Spleen (tissue), 13 donors: ENCODE measurements at regions of chr2 and their contacts with region 1.

Region 1: GRCh38 chr2:127649684-127650040 is 3.7 kb downstream of the GPR17 start:
- DNase-seq: peak; percentile 92
- H3K4me3 ChIP-seq: peak overlapping the region in 1 of 8 donors; percentile 21
- H3K27ac ChIP-seq: peak overlapping the region in 6 of 8 donors; percentile 36 to 87 (median 67)
- H3K4me1 ChIP-seq: peaks cover 26 to 88% (median 68%) of the 10 kb centered on the region in 6 donors
- H3K27me3 ChIP-seq: no peaks in the 10 kb centered on the region
- CTCF ChIP-seq: peak; percentile 64 to 92 (median 88)
- POLR2A ChIP-seq: no peak

Region 2: DNA sequence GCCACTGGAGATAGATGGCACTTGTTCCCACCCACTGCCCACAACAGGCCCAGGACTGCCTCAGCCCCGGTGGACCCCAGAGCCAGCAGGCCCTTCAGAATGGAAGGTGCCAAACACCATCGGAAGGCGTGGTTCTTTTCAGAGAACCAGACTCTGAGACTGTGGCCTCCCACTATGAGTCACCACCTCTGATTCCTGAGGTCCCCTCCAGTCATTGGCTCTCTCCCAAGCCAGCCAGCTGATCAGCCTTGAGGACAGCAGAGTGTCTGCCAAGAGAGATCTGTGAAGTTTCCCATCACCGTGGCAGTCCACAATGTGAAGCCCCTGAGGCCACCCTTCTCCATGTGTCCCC is 251.4 kb before region 1 on chr2:
- intact Hi-C with region 1: no loop called
- DNase-seq: no peak
- H3K4me3 ChIP-seq: no peak overlapping the region
- H3K27ac ChIP-seq: no peak overlapping the region
- H3K4me1 ChIP-seq: peaks cover 0 to 13% (median 5%) of the 10 kb centered on the region in 6 donors
- H3K27me3 ChIP-seq: no peaks in the 10 kb centered on the region
- CTCF ChIP-seq: no peak
- POLR2A ChIP-seq: no peak

Region 3: DNA sequence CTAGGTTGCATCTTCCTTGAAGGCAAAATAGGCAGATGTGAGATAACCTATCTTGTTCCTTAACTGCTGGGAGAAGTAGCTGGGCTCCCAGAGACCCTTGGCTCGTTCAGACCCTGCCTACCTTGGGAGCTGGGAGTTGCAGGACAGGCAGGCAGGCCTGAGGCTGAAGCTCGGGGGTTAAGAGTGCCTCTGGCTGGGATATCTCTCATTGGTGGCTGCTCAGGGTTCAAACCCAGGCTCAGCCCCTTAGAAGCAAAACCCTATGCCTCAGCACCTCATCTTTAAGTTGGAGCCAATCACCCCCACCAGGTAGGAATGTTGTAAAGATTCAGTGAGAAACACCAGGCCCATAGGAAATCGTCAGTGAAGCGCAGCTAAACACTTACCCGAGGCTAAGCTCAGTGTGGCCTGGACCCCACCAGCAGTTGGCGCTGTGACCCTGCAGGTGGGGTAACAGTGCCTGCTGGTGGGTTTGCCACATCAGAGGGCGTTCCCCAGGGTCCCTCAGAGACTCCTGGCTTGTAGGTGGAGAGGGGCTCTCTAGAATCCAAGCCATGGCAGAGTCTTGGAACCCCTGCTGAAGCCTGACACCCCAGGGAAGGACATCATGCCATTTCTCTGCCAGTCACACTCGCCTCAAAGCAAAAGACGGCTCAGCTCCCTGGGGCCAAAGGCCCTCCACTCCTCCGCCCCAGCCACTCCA is 58.3 kb before region 1 on chr2:
- intact Hi-C with region 1: loop called (anchors 10 kb)
- DNase-seq: peak; percentile 92
- H3K4me3 ChIP-seq: no peak overlapping the region
- H3K27ac ChIP-seq: peak overlapping the region in 1 of 8 donors; percentile 22
- H3K4me1 ChIP-seq: peaks cover 0 to 11% (median 7%) of the 10 kb centered on the region in 6 donors
- H3K27me3 ChIP-seq: no peaks in the 10 kb centered on the region
- CTCF ChIP-seq: peak; percentile 77 to 95 (median 86)
- POLR2A ChIP-seq: no peak